ENCODE measurements at regions of chr5 and their contacts with region 1.

Region 1: DNA sequence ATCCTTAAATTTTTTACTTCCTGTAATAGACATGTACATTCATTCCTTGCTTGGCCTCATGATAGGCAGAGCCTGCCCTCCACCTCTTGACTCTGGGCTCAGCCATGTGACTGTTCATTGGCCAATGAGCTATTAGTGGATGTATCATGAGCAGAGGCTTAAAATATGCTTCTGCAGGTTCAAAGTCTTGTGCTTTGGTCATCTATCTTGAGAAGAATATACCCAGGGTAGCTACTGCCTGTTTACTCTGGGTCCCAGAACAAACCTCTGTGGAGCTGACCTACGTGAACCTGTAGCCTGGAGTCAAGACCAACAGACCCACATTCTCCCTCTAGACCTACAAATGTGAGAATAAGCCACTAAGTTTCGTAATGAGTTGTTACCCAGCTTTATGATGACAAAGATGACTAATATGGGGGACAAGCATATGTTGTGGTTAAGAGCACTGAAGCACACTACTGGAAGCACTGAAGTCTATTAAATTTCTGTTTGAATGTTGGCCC is 244.4 kb downstream of the MAST4 start:
- DNase-seq: peak; percentile 60
- H3K4me3 Mint-ChIP-seq: no peak overlapping the region
- H3K27ac Mint-ChIP-seq: peak overlapping the region; percentile 88
- H3K4me1 Mint-ChIP-seq: peaks cover 52% of the 10 kb centered on the region
- H3K27me3 Mint-ChIP-seq: peaks cover 25% of the 10 kb centered on the region

Region 2: DNA sequence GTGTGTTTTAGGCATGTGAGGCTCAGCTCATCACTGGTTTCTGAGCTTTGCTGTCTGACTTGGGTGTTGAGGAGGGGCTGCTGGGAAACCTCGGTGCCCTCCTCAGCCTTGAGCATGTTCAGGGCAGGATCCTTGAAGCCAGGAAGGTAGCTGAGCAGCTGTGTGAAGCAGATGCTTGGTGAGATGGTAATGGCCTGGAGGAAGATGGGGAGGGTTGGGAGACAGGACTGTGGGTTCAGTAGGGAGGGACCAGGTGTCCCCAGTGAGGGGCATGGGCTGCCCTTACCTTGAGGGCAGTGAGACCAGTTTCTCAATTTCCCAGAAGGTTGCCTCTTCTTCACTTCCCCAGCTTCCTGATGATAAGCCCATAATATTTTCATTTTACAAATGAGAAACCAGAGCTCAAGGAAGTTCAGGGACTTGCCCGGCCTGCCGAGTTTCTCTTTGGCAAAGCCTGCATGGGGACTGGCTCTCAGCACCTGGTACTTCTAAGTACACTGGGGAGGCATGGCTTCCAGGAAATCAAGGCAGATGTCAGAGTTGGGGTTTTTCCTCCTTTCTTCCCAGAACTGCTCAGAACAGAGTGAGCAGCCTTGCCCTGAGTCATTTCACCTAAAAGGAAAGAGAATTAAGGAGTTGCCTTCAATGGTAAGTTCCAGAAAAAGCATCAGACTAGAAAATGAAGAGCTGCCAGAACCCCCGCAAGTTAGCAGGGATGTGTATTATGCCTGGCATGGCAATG is 18.7 kb before region 1 on chr5:
- CTCF ChIA-PET with region 1: interaction called, 4 read pairs
- POLR2A ChIA-PET with region 1: interaction called, 5 read pairs
- intact Hi-C with region 1: loop called (anchors 1 kb)
- DNase-seq: peak; percentile 77
- H3K4me3 Mint-ChIP-seq: peak overlapping the region; percentile 48
- H3K27ac Mint-ChIP-seq: peak overlapping the region; percentile 88
- H3K4me1 Mint-ChIP-seq: peaks cover 34% of the 10 kb centered on the region
- H3K27me3 Mint-ChIP-seq: no peaks in the 10 kb centered on the region

Region 3: DNA sequence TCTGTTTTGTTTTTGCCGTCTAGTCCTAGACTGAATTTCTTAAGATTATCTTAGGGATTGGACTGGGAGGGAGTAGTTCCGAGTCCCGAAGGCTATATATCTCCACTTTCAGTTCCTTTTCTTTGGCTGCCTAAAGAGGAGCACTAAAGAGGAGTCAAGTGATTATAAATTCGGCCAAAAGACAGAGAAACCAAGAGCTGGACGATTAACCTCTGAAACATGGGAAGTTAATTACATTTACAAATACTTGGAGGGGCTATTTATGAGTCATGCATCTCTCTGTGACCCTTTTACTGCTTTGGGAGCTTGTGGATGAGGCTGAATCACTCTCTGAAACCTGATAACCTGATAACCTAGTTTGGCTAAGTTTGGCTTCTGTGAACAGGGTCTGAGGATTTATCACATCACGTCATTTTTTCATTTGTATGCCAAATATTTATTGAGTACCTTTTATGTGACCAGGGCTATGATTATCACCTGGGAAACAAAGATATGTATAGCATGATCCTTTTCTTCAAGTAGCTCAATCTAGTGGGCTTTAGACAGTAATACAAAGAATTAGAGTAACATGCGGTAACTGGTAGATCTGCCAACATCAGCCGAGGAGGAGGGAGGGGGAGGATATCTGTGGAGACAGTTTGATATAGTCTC is 175.1 kb after region 1 on chr5:
- CTCF ChIA-PET with region 1: no interaction called
- POLR2A ChIA-PET with region 1: no interaction called
- intact Hi-C with region 1: no loop called
- DNase-seq: no peak
- H3K4me3 Mint-ChIP-seq: no peak overlapping the region
- H3K27ac Mint-ChIP-seq: no peak overlapping the region
- H3K4me1 Mint-ChIP-seq: peaks cover 63% of the 10 kb centered on the region
- H3K27me3 Mint-ChIP-seq: no peaks in the 10 kb centered on the region

Measured in activated CD4-positive, alpha-beta memory T cell treated with anti-CD3 and anti-CD28 coated beads for 36 hours (primary cell).